ENCODE measurements at regions of chr5 and their contacts with region 1.

Region 1: GRCh38 chr5:158074992-158075769 is 216.2 kb upstream of the CLINT1 start:
- DNase-seq: peak; percentile 9 to 26 (median 17)
- H3K4me3 ChIP-seq: no peak overlapping the region
- H3K4me3 Mint-ChIP-seq: peak overlapping the region; percentile 51 to 81
- H3K27ac ChIP-seq: no peak overlapping the region
- H3K27ac Mint-ChIP-seq: no peak overlapping the region
- H3K4me1 ChIP-seq: no peaks in the 10 kb centered on the region
- H3K4me1 Mint-ChIP-seq: peaks cover 5% of the 10 kb centered on the region
- H3K27me3 ChIP-seq: peaks cover 0 to 2% of the 10 kb centered on the region in 2 donors
- H3K27me3 Mint-ChIP-seq: peaks cover 0 to 7% (median 7%) of the 10 kb centered on the region in 3 donors
- CTCF ChIP-seq: peak; percentile 81

Region 2: GRCh38 chr5:157870837-157871834 is 204.0 kb before region 1 on chr5:
- intact Hi-C with region 1: no loop called
- DNase-seq: peak in 2 of 3 donors; percentile 10 to 83
- H3K4me3 ChIP-seq: no peak overlapping the region
- H3K4me3 Mint-ChIP-seq: peak overlapping the region in 1 of 2 donors; percentile 8
- H3K27ac ChIP-seq: no peak overlapping the region
- H3K27ac Mint-ChIP-seq: peak overlapping the region in 3 of 7 donors; percentile 2 to 16 (median 14)
- H3K4me1 ChIP-seq: peaks cover 0 to 4% of the 10 kb centered on the region in 2 donors
- H3K4me1 Mint-ChIP-seq: peaks cover 18% of the 10 kb centered on the region
- H3K27me3 ChIP-seq: no peaks in the 10 kb centered on the region
- H3K27me3 Mint-ChIP-seq: peaks cover 2 to 5% (median 2%) of the 10 kb centered on the region in 3 donors
- CTCF ChIP-seq: no peak

Region 3: GRCh38 chr5:158695595-158696330 is 620.6 kb after region 1 on chr5:
- intact Hi-C with region 1: loop called in 1 of 2 experiments (anchors 10 kb)
- DNase-seq: peak; percentile 47 to 66 (median 63)
- H3K4me3 ChIP-seq: no peak overlapping the region
- H3K4me3 Mint-ChIP-seq: no peak overlapping the region
- H3K27ac ChIP-seq: no peak overlapping the region
- H3K27ac Mint-ChIP-seq: no peak overlapping the region
- H3K4me1 ChIP-seq: no peaks in the 10 kb centered on the region
- H3K4me1 Mint-ChIP-seq: peaks cover 5% of the 10 kb centered on the region
- H3K27me3 ChIP-seq: no peaks in the 10 kb centered on the region
- H3K27me3 Mint-ChIP-seq: peaks cover 0 to 4% (median 1%) of the 10 kb centered on the region in 3 donors
- CTCF ChIP-seq: peak; percentile 99

Measured in CD14-positive monocyte (primary cell).